Heart left ventricle (tissue), 16 donors: ENCODE measurements at regions of chr19 and their contacts with region 1.

Region 1: DNA sequence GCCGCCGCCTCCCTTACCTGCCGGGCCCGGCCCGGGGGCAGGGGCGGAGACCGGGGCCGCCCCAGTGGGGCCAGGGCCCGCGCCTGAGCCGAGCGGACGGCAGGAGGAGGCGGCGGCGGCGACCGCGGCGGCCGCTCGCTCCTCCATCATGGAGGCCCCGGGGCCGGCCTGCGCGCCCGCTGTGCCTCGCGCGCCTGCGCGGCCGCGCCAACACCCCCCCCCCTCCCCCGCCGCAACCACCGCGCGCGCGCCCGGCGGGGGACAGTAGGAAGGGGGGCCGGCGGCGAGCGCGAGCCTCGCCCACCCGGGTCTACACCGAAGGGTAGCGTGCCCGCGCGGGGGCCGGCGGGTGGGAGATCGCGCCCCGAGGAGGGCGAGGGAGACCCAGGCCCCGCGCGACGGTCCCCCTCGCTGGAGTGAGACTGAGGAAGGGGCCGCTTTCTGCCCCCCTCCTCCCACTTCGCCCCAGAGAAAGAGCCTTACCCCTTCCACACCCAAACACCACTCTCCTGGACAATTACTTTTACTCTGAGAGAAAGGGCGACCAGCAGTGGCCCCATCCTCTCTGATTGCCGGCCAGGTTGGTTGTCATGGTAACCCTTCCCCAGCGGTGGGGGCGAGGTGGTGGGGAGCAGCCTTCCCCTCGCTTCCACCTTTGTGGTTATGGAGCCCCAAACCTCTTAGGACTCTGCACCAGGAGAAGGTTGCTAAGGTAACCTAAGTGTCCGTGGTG is at the start of gene STRN4:
- DNase-seq: peak in 3 of 5 donors; percentile 61 to 71 (median 67)
- ATAC-seq: peak; percentile 44 to 83 (median 65)
- H3K4me3 ChIP-seq: peak within 1 kb of the TSS; percentile 82 to 100 (median 96)
- H3K27ac ChIP-seq: peak within 1 kb of the TSS; percentile 83 to 97 (median 90)
- H3K4me1 ChIP-seq: peaks cover 0 to 48% (median 28%) of the 10 kb centered on the region in 12 donors
- H3K27me3 ChIP-seq: no peaks in the 10 kb centered on the region
- CTCF ChIP-seq: no peak
- POLR2A ChIP-seq: no peak
- total RNA-seq, gene STRN4: 41.0 to 93.6 (median 53.7) TPM

Region 2: GRCh38 chr19:46461537-46461936 is 284.9 kb before region 1 on chr19:
- intact Hi-C with region 1: no loop called
- DNase-seq: no peak
- ATAC-seq: no peak
- H3K4me3 ChIP-seq: no peak overlapping the region
- H3K27ac ChIP-seq: no peak overlapping the region
- H3K4me1 ChIP-seq: no peaks in the 10 kb centered on the region
- H3K27me3 ChIP-seq: no peaks in the 10 kb centered on the region
- CTCF ChIP-seq: no peak
- POLR2A ChIP-seq: no peak

Region 3: GRCh38 chr19:46614114-46614722 is 132.2 kb before region 1 on chr19:
- intact Hi-C with region 1: loop called in 1 of 10 experiments (anchors 10 kb)
- DNase-seq: peak; percentile 82 to 91 (median 84)
- ATAC-seq: peak; percentile 53 to 77 (median 76)
- H3K4me3 ChIP-seq: no peak overlapping the region
- H3K27ac ChIP-seq: peak overlapping the region in 1 of 12 donors; percentile 30
- H3K4me1 ChIP-seq: peaks cover 0 to 55% (median 24%) of the 10 kb centered on the region in 12 donors
- H3K27me3 ChIP-seq: no peaks in the 10 kb centered on the region
- CTCF ChIP-seq: peak; percentile 76 to 96 (median 88)
- POLR2A ChIP-seq: no peak

Region 4: GRCh38 chr19:46697204-46697960 is 49.1 kb before region 1 on chr19:
- intact Hi-C with region 1: loop called in 1 of 10 experiments (anchors 5 kb)
- DNase-seq: peak; percentile 83 to 92 (median 91)
- ATAC-seq: peak; percentile 95 to 99 (median 97)
- H3K4me3 ChIP-seq: peak overlapping the region in 4 of 12 donors; percentile 5 to 34 (median 22)
- H3K27ac ChIP-seq: no peak overlapping the region
- H3K4me1 ChIP-seq: peaks cover 0 to 13% (median 3%) of the 10 kb centered on the region in 12 donors
- H3K27me3 ChIP-seq: no peaks in the 10 kb centered on the region
- CTCF ChIP-seq: no peak
- POLR2A ChIP-seq: no peak

Region 5: DNA sequence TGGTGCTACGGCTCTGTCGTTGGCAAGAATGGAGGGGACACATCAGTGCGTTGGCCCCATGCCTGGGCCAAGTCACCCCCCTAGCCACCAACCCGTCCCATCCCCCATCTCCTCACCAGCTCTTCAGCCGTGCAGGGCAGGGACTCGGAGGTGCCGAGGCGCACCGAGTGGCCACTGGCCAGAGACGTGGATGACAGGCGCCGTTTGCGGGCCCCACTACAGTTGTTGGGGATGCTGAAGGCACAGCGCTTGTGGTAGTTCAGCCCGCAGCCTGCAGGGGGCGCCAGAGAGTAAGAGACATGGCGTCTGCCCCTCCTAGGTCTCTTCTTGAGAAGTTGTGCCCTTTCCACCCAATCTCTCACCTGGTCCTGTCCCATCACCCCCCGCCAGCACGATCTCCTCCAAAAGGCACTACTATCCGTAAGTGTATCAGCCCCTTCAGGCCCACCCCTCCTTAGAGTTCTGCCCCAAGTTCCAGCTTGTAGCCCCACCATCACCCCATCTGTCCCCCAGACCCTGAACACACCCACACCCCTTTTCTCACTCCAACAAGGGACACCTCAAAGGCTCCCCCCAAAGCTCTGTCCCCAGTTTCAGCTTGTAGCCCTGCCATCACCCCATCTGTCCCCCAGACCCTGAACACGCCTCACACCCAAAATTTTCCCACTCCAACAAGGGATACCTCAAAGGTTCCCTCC is 41.9 kb before region 1 on chr19:
- intact Hi-C with region 1: loop called in 2 of 10 experiments (anchors 5 kb)
- DNase-seq: peak; percentile 65 to 91 (median 68)
- ATAC-seq: peak; percentile 49 to 80 (median 78)
- H3K4me3 ChIP-seq: no peak overlapping the region
- H3K27ac ChIP-seq: no peak overlapping the region
- H3K4me1 ChIP-seq: peaks cover 0 to 4% (median 0%) of the 10 kb centered on the region in 12 donors
- H3K27me3 ChIP-seq: no peaks in the 10 kb centered on the region
- CTCF ChIP-seq: peak; percentile 91 to 99 (median 95)
- POLR2A ChIP-seq: no peak

Region 6: DNA sequence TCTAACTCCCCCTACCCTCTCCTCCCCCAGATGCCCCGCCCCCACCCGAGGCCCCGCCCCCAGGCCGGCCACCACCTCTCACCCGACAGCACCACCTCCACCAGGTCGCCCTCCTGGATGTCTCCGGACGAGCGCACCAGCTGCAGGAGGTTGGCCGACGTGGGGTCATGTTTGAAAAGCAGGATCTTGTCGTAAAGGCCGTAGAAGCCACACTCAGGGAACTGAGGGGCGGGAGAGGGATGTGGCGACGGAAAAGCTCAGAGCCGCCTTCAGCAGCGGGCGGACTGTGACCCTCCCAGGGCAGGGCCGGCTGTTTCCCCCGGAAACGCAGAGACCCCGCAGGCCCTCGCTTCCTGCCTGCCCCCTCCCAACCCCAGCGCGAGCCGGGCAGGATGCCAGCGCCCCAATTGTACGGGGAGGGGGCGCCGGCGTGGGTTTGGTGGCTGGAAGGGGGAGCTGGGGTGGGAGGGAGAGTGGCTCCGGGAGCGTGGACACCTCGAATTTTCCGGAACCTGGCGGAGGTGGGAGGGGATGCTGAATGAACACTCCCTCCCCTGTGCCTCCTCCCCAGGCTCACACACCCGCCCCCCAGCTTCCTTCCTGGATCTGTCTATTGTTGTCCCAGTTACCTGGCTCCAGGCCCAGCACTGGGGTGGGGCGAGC is 32.5 kb before region 1 on chr19:
- intact Hi-C with region 1: loop called in 2 of 10 experiments (anchors 5 kb)
- DNase-seq: peak; percentile 93 to 96 (median 94)
- ATAC-seq: peak; percentile 63 to 79 (median 72)
- H3K4me3 ChIP-seq: peak overlapping the region; percentile 32 to 89 (median 77)
- H3K27ac ChIP-seq: peak overlapping the region; percentile 66 to 96 (median 90)
- H3K4me1 ChIP-seq: peaks cover 0 to 53% (median 27%) of the 10 kb centered on the region in 12 donors
- H3K27me3 ChIP-seq: no peaks in the 10 kb centered on the region
- CTCF ChIP-seq: no peak
- POLR2A ChIP-seq: no peak

Region 7: DNA sequence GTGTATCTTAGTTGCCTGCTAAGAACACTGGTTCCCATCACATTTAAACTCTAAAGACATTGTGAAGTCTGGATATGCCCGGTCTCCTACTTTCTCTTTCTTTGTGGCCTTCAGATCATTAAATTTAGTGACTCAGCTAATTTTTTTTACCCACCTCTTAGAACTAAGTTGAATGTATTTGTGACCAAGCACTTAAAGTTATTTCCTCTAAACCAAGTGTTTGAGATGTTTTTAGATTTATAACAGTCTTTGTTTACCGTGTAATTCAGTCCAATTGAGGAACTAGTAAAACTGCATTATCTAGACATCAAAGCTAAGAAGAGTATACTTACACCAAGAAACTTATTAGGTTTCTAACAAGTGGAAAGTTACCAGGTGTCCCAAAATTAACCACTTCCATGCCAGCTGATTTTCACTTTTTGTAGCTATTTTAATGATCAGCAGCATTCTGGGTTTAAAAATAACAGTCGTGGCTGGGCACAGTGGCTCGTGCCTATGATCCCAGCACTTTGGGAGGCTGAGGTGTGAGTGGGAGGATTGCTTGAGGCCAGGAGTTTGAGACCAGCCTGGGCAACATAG is 167.5 kb after region 1 on chr19:
- intact Hi-C with region 1: no loop called
- DNase-seq: no peak
- ATAC-seq: no peak
- H3K4me3 ChIP-seq: peak overlapping the region in 1 of 12 donors; percentile 8
- H3K27ac ChIP-seq: peak overlapping the region in 10 of 12 donors; percentile 22 to 78 (median 44)
- H3K4me1 ChIP-seq: peaks cover 0 to 69% (median 22%) of the 10 kb centered on the region in 12 donors
- H3K27me3 ChIP-seq: no peaks in the 10 kb centered on the region
- CTCF ChIP-seq: no peak
- POLR2A ChIP-seq: no peak